ENCODE measurements at regions of chr16 and their contacts with region 1.

Region 1: GRCh38 chr16:88442727-88443576 is 10.1 kb upstream of the ZFPM1 start:
- DNase-seq: peak; percentile 77 to 86
- ATAC-seq: peak; percentile 87 to 95 (median 89)
- H3K4me3 ChIP-seq: no peak overlapping the region
- H3K27ac ChIP-seq: no peak overlapping the region
- H3K4me1 ChIP-seq: no peaks in the 10 kb centered on the region
- H3K27me3 ChIP-seq: peaks cover 0 to 14% (median 6%) of the 10 kb centered on the region in 3 donors
- CTCF ChIP-seq: peak; percentile 95

Region 2: GRCh38 chr16:88468275-88469141 is 25.6 kb after region 1 on chr16:
- intact Hi-C with region 1: no loop called
- DNase-seq: no peak
- ATAC-seq: peak; percentile 57 to 92 (median 81)
- H3K4me3 ChIP-seq: no peak overlapping the region
- H3K27ac ChIP-seq: no peak overlapping the region
- H3K4me1 ChIP-seq: no peaks in the 10 kb centered on the region
- H3K27me3 ChIP-seq: peaks cover 0 to 19% (median 2%) of the 10 kb centered on the region in 3 donors
- CTCF ChIP-seq: no peak

Region 3: GRCh38 chr16:88527186-88527936 is 84.4 kb after region 1 on chr16:
- intact Hi-C with region 1: loop called (anchors 1 to 2 kb)
- DNase-seq: peak; percentile 71 to 77
- ATAC-seq: peak; percentile 64 to 79 (median 72)
- H3K4me3 ChIP-seq: peak overlapping the region; percentile 7
- H3K27ac ChIP-seq: no peak overlapping the region
- H3K4me1 ChIP-seq: peaks cover 69% of the 10 kb centered on the region
- H3K27me3 ChIP-seq: peaks cover 0 to 17% (median 5%) of the 10 kb centered on the region in 3 donors
- CTCF ChIP-seq: peak; percentile 81

Region 4: DNA sequence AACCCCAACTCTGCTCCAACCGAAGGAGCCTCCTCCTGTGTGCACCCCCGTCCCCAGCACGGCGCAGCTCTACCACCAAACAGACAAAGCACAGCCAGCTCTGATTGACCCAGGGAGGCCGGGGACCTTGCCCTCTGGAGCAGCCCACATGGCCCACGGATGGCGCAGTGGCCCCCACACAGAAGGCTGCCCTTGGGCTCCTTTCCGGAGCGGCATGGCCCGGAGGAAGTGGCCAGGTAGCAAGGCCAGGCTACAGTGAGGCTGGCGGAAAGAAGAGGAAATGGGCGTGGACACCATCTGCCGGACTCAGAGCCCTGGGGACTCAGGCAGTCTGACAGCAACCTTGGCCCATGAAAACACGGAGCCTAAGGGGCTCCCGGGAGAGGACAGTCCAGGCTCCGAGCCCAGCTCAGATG is 107.3 kb after region 1 on chr16:
- intact Hi-C with region 1: no loop called
- DNase-seq: peak in 1 of 2 donors; percentile 67
- ATAC-seq: peak in 2 of 4 donors; percentile 29 to 37
- H3K4me3 ChIP-seq: no peak overlapping the region
- H3K27ac ChIP-seq: no peak overlapping the region
- H3K4me1 ChIP-seq: no peaks in the 10 kb centered on the region
- H3K27me3 ChIP-seq: peaks cover 0 to 43% (median 12%) of the 10 kb centered on the region in 3 donors
- CTCF ChIP-seq: no peak

Region 5: DNA sequence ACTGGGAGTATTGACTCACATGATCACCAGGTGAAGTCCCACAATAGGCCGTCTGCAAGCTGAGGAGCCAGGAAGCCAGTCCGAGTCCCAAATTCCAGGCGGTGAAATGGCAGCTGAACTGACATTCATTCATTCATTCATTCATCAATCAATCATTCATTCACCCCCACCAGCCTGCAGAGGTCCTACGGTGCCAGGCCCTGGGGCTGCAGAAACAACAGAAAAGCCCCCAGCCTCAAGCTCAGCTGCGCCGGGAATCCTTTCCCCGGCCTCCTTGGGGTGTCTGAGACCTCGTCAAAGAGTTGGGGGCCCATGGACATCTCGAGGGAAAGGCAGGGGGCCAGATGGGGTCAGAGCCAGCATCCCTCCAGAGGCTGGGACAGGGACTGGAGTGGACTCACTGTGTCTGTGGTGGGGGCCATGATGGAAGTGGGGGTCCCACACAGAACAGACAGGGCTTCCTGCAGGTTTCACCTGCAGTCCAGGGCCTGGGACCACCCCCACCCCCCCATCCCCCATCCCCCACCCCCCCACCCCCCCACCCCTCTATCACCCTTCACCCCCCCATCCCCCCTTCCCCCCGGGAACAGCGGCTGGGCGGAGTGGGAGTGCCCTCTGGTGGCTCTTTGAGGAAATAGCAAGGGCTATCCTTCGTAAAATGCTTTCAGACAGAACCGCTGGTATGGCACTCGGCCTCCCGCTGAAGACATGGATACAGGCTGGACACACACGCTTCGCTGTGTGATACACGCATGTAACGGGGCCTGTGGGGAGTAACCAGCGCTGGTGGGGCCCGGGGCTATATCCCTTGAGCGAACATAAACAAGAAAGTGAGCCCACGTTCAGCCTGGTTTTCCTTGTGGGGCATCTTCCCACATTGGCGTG is 118.8 kb after region 1 on chr16:
- intact Hi-C with region 1: loop called (anchors 1 to 2 kb)
- DNase-seq: peak; percentile 33 to 68
- ATAC-seq: peak; percentile 43 to 78 (median 61)
- H3K4me3 ChIP-seq: no peak overlapping the region
- H3K27ac ChIP-seq: no peak overlapping the region
- H3K4me1 ChIP-seq: peaks cover 5% of the 10 kb centered on the region
- H3K27me3 ChIP-seq: peaks cover 0 to 4% (median 0%) of the 10 kb centered on the region in 3 donors
- CTCF ChIP-seq: peak; percentile 60